ENCODE measurements at regions of chr6 and their contacts with region 1.

Region 1: DNA sequence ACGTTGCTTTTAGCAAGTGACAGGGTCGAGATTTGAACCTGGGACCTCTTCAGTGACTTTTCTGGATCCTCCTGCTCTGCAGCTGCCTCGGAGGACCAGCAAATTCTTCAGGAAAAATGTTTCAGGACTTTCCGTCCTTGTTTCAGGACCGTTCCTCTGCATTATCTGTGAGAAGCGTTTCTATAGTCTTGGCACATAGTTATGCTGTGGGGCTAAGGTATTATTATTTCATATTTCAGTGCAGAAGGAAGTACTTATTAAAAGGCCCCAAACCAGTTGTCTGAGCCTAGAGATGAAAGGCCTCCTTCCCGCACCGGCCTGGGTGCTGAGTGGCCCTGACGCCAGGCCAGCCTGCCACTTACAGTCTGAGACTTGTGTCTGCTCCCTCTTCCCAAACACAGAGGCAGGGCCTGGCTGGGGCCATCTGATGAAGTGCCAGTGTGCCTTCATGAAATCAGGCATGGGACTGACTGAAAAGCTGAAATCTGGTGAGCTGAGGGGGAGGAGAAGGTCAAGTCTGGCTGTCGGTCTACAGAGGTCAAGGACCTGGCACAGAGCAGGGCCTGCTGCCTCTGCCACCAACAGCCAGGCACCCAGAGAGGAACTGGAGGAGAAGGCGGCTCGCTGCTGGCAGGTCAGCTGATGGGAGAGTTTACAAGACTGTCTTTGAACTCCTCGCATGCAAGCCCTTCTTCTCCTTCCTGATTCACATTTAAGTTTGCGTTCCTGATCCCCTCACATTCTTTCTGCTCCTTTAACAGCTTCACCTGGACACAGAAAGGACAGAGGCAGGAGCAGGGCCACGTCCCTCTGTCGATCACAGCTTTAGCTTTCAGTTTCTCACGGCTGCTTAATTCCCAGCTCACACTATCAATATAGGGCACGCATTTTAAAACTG is 8.9 kb upstream of the QKI start:
- DNase-seq: peak; percentile 68 to 87 (median 84)
- ATAC-seq: peak; percentile 85 to 90
- H3K4me3 ChIP-seq: peak overlapping the region; percentile 47
- H3K27ac ChIP-seq: peak overlapping the region; percentile 89
- H3K4me1 ChIP-seq: peaks cover 8% of the 10 kb centered on the region
- H3K27me3 ChIP-seq: no peaks in the 10 kb centered on the region

Region 2: GRCh38 chr6:163355426-163355991 is 50.2 kb before region 1 on chr6:
- intact Hi-C with region 1: loop called in 2 of 4 experiments (anchors 5 to 10 kb)
- DNase-seq: peak; percentile 78 to 90 (median 85)
- ATAC-seq: peak; percentile 83 to 89
- H3K4me3 ChIP-seq: no peak overlapping the region
- H3K27ac ChIP-seq: peak overlapping the region; percentile 88
- H3K4me1 ChIP-seq: peaks cover 8% of the 10 kb centered on the region
- H3K27me3 ChIP-seq: no peaks in the 10 kb centered on the region

Region 3: GRCh38 chr6:163364641-163365040 is 41.0 kb before region 1 on chr6:
- intact Hi-C with region 1: loop called in 2 of 4 experiments (anchors 5 to 10 kb)
- DNase-seq: peak; percentile 39 to 68 (median 56)
- ATAC-seq: peak; percentile 78 to 89
- H3K4me3 ChIP-seq: no peak overlapping the region
- H3K27ac ChIP-seq: peak overlapping the region; percentile 19
- H3K4me1 ChIP-seq: no peaks in the 10 kb centered on the region
- H3K27me3 ChIP-seq: no peaks in the 10 kb centered on the region

Region 4: GRCh38 chr6:163427498-163428254 is 22.0 kb after region 1 on chr6:
- intact Hi-C with region 1: no loop called
- DNase-seq: peak in 1 of 3 donors; percentile 34
- ATAC-seq: peak; percentile 51 to 63
- H3K4me3 ChIP-seq: no peak overlapping the region
- H3K27ac ChIP-seq: no peak overlapping the region
- H3K4me1 ChIP-seq: peaks cover 12% of the 10 kb centered on the region
- H3K27me3 ChIP-seq: no peaks in the 10 kb centered on the region